Sciatic nerve (tissue), 2 donors: ENCODE measurements at regions of chr1 and their contacts with region 1.

Region 1: GRCh38 chr1:94061513-94062443 is 59.2 kb downstream of the ABCA4 start:
- DNase-seq: peak; percentile 83
- ATAC-seq: peak; percentile 87

Region 2: GRCh38 chr1:93749894-93750301 is 311.9 kb before region 1 on chr1:
- intact Hi-C with region 1: no loop called
- DNase-seq: no peak
- ATAC-seq: no peak

Region 3: DNA sequence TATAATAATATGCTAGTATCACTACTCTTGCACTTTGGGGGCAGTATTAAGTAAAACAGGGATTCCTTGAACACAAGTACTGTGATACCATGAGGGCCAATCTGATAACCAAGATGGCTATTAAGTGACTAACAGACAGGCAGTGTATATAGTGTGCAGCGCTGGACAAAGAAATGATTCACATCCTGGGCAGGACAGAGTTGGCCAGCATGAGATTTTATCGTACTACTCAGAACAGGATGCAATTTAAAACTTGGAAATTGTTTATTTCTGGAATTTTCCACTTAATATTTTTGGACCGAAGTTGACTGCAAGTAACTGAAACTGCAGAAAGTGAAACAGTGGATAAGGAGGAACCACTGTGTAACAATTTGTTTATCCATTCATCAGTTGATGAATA is 257.4 kb before region 1 on chr1:
- intact Hi-C with region 1: no loop called
- DNase-seq: no peak
- ATAC-seq: peak; percentile 60

Region 4: DNA sequence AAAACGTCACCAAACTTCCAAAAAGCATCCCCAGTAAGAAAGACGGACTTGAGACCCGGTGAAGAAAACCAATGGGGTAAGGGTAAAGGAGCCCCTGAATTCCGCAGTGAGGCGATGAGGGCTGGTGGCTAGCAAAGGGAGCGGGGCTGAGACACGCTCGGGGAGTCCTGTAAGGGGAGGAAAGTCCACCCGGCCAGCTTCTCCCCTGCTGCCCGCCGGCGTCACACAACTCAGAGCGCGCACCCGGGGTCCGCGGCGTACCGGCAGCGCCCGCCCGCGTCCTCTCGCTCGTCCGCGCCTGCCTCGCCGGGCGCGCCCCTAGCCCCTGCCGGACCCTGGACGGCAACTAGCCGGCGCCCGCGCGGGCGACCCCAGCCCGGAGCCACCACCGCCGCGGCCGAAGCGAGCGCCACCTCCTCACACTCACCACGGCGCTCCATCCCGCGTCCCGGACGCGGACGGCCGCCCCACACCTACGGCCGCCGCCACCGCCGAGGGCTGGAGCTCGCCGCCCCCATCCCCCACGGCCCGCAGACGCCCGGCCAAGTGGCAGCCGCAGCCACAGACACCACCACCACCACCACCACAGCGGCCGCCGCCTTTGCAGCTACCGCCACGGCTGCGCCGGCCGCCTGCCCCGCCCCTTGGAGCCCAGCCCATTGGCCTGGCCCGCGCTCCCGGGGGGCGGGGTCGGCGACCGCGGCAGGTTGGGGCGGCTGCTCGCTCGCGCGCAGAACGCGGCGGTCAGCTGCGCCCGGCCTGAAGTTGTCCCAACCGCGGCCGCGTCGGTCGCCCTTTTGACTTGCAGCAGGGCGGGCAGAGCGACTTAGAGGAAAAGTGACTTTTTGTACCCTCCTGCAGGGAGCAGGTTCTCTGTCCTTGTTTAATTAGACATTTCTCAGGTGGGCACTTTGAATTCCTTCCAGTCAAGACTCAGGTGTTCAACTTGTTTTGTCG is 185.6 kb after region 1 on chr1:
- intact Hi-C with region 1: loop called (anchors 10 kb)
- DNase-seq: peak; percentile 84
- ATAC-seq: peak; percentile 85

Region 5: DNA sequence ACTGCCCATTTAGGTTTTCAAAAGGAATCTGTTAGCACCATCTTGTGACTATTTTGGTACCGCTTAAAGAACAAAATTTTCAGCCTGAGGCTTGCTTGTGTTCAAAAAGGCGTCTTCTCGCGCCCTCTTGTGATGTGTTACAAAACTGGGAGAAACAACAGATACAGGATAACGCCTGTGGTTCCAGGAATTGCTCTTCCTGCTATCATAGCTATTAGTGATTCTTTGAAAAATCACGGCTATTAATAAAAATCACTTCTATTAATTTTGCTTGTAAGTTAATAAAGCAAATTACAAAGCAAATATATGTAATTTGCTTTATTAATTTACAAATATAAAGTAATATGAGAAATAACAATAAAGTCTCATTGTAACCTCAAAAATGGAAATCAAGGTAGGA is 274.2 kb after region 1 on chr1:
- intact Hi-C with region 1: loop called (anchors 5 kb)
- DNase-seq: peak; percentile 79
- ATAC-seq: peak; percentile 94